ENCODE measurements at regions of chr7 and their contacts with region 1.

Region 1: DNA sequence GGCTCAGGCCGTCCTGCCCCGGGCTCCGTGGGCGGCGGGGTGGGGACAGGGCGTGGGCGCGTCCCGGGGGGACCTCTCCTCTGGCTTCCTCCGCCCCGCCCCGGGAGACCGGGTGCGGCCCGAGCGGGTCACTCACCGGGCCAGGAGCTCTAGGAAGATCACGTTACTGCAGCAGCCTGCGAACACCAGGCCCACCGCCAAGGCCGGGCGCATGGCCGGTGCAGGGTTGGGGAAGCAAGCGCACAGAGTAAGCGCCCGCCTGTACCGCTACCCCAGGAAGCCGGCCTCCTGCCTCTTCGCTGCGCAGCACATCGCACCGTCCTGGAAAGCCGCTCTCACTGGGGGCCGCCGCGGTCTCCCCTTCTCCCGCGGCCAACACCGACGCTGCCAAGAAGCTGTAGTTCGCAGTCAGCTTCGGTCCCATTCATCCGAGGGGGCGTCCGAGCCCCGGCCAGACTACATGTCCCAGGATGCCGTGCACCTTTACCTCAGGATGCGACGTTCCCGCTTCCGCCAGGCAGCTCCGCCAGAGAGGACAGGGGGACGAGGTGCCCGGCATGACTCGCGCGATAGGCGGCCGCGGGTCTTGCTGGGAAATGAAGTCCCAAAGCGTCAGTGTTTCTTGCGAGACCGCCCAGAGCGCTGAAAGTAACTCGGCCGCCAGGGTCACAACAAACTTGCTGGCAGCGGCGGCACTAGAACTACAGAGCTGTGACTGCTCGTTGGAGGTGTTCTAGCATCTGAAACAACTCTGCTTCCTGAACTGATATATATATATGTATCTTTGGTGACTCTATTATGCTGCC is at the start of gene SLC35B4:
- DNase-seq: peak; percentile 98
- H3K4me3 Mint-ChIP-seq: peak within 1 kb of the TSS; percentile 93
- H3K27ac Mint-ChIP-seq: peak within 1 kb of the TSS; percentile 92
- H3K4me1 Mint-ChIP-seq: peaks cover 21% of the 10 kb centered on the region
- H3K27me3 Mint-ChIP-seq: peaks cover 5% of the 10 kb centered on the region
- total RNA-seq, gene SLC35B4: 23.0 and 27.6 TPM in 2 replicates

Region 2: GRCh38 chr7:133081599-133082389 is 1234.9 kb before region 1 on chr7 and contains the start of gene CHCHD3:
- intact Hi-C with region 1: loop called (anchors 1 kb)
- DNase-seq: peak; percentile 99
- H3K4me3 Mint-ChIP-seq: peak within 1 kb of the TSS; percentile 95
- H3K27ac Mint-ChIP-seq: peak within 1 kb of the TSS; percentile 87
- H3K4me1 Mint-ChIP-seq: peaks cover 18% of the 10 kb centered on the region
- H3K27me3 Mint-ChIP-seq: peaks cover 3% of the 10 kb centered on the region
- total RNA-seq, gene CHCHD3: 74.5 and 76.2 TPM in 2 replicates

Region 3: DNA sequence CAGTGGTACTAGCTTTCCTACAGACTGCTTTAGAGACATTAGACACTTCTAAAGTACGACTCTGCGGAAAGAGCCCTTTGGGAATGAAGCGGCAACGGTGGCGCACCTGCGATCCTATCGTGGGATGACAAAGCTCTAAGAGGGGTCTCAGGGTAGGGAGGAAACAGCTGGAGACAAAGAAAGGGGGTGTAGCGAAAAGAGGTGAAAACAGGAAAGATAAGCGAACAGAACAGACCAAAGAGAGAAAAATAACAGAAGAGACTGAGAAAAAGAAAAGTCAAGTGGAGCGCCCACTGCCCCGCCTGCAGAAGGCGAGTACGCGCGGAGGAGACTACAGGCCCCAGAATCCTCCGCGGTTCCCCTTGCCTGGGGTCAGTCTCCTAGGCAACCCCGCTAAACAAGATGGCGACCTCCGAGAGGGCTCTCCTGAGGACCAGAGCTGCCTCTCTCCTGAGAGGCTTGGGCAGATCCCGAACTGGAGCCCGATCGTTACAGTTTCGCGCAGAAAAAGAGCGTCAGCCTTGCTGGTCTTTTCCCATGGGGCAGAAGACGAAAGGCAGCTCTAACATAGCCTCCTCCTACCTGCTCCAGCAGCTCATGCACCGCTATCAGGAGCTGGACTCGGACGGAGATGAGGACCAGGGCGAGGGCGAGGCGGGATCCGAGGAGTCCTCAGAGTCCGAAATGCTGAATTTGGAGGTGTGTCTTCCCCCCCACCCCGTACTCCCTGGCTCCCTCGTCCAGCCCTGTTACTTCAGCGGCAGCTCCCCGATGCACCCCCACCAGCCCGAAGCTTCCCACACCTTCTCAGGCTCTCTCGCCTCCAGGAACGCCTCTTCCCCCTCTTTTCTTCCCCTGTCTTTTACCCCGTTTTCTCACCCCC is 189.5 kb before region 1 on chr7 and contains the start of gene LRGUK:
- intact Hi-C with region 1: loop called (anchors 1 kb)
- DNase-seq: peak; percentile 94
- H3K4me3 Mint-ChIP-seq: peak within 1 kb of the TSS; percentile 90
- H3K27ac Mint-ChIP-seq: peak within 1 kb of the TSS; percentile 51
- H3K4me1 Mint-ChIP-seq: peaks cover 9% of the 10 kb centered on the region
- H3K27me3 Mint-ChIP-seq: peaks cover 34% of the 10 kb centered on the region
- total RNA-seq, gene LRGUK: 0.12 and 0.16 TPM in 2 replicates

Region 4: GRCh38 chr7:134432296-134433152 is 115.8 kb after region 1 on chr7:
- intact Hi-C with region 1: loop called (anchors 2 kb)
- DNase-seq: peak; percentile 91
- H3K4me3 Mint-ChIP-seq: peak overlapping the region; percentile 85
- H3K27ac Mint-ChIP-seq: peak overlapping the region; percentile 86
- H3K4me1 Mint-ChIP-seq: peaks cover 14% of the 10 kb centered on the region
- H3K27me3 Mint-ChIP-seq: peaks cover 2% of the 10 kb centered on the region

Region 5: DNA sequence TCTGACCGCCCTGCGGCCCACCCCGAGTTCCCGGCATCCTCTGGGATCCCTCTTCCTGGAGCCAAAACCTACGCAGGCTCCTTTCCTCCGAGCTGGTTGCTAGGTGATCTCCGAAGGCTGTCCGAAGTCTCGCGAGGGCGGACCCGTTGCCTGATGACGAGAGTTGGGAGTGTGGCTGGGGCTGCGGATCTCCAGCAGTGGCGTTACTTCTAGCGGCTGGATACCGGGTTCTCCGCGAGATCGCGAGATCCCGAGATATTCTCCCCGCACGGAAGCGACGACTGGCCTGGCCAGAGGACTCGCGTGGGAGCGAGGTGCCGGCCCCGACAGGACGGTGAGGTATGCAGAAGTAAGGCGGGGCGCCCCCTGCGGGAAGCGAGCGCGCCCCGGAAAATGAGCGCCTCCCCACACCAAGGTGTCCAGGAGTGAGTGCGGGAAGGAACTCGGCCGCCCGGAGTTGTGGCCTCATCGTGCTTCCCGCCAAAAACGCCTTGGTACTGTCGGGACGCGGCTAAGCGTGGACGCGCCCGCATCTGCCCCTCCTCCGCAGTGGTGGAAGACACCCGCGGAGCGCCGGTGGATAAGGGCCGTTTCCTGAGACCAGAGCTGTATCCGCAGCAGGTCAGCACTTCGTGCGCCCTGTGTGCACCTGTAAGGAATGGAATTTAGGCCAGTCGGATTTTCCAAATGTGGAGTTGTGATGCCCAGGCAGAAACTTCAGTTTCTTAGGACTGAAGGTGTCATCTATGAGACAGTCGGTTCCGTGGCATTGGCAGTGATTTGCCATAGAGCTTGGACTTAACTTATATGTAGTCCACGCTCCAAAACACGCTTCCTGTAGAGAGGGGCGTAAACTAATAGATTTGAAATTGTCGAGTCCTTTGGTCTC is 669.9 kb after region 1 on chr7 and contains the start of gene AGBL3:
- intact Hi-C with region 1: loop called (anchors 5 kb)
- DNase-seq: peak; percentile 97
- H3K4me3 Mint-ChIP-seq: peak within 1 kb of the TSS; percentile 97
- H3K27ac Mint-ChIP-seq: peak within 1 kb of the TSS; percentile 95
- H3K4me1 Mint-ChIP-seq: peaks cover 31% of the 10 kb centered on the region
- H3K27me3 Mint-ChIP-seq: no peaks in the 10 kb centered on the region
- total RNA-seq, gene AGBL3: 2.0 and 3.4 TPM in 2 replicates

Region 6: GRCh38 chr7:135977007-135977741 is 1660.4 kb after region 1 on chr7 and contains the start of gene MTPN:
- intact Hi-C with region 1: loop called (anchors 5 kb)
- DNase-seq: peak; percentile 99
- H3K4me3 Mint-ChIP-seq: peak within 1 kb of the TSS; percentile 95
- H3K27ac Mint-ChIP-seq: peak within 1 kb of the TSS; percentile 86
- H3K4me1 Mint-ChIP-seq: peaks cover 61% of the 10 kb centered on the region
- H3K27me3 Mint-ChIP-seq: no peaks in the 10 kb centered on the region
- total RNA-seq, gene MTPN: 121 and 126 TPM in 2 replicates

Measured in activated CD4-positive, alpha-beta T cell treated with anti-CD3 and anti-CD28 coated beads, Interleukin-2, amount 10 ng/mL, durations not matched to agents 24 days and 14 days (primary cell).